Mammary epithelial cell (primary cell): ENCODE measurements at regions of chr1 and their contacts with region 1.

Region 1: DNA sequence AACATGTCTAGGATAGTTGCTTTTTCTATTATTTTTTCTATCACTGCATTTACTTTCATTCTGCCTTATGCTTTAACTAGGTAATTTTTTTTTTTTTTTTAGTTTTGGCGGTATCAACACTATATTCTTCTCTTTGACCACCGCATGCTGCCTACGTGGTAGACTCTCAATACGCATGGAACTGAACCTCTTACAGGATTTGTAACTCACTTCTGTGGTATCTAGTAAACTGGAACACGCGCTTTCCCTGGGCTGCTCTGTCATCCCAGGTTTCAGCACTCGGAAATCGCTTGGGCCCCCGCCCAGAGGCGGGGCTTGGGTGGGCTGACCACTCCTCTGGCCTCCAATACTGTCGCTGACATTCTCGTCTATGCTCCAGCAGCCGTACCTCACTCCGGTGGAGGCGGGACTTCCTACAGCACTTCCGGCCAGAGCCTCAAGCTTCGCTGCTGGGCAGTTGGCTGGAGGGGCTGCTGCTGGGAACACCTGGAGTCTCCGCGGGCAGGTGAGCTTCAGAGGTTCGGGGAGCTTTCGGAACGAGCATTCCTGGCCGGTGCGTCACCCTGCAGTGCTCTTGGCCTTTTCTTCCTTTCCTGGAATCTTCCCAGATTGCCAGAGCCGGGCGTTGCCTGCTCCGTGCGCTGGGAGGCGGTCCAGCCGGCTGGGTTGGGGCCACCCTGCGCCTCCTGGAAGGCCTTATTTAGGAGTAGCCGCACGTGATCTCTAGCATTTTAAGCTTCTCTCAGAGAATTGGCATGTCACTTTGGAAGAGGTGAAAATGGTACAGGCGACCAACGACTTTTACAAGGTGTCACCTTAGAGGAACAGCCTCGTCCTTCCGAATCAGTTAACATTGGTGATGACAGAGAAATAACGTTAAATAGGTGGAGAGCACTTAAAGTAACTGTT is at the start of gene TBCE:
- DNase-seq: peak; percentile 100
- H3K4me3 ChIP-seq: peak within 1 kb of the TSS; percentile 53 to 68 (median 63)
- H3K27ac ChIP-seq: peak within 1 kb of the TSS; percentile 94
- H3K4me1 ChIP-seq: peaks cover 15% of the 10 kb centered on the region
- H3K27me3 ChIP-seq: no peaks in the 10 kb centered on the region
- CTCF ChIP-seq: peak in 1 of 2 donors; percentile 44
- total RNA-seq, gene TBCE: 15.8 to 19.4 TPM

Region 2: GRCh38 chr1:235253219-235253962 is 113.9 kb before region 1 on chr1:
- CTCF ChIA-PET with region 1: no interaction called
- dilution Hi-C with region 1: no loop called
- in situ Hi-C with region 1: no loop called
- intact Hi-C with region 1: loop called (anchors 2 kb)
- DNase-seq: peak; percentile 63
- H3K4me3 ChIP-seq: no peak overlapping the region
- H3K27ac ChIP-seq: no peak overlapping the region
- H3K4me1 ChIP-seq: no peaks in the 10 kb centered on the region
- H3K27me3 ChIP-seq: no peaks in the 10 kb centered on the region
- CTCF ChIP-seq: peak; percentile 73 to 93

Region 3: DNA sequence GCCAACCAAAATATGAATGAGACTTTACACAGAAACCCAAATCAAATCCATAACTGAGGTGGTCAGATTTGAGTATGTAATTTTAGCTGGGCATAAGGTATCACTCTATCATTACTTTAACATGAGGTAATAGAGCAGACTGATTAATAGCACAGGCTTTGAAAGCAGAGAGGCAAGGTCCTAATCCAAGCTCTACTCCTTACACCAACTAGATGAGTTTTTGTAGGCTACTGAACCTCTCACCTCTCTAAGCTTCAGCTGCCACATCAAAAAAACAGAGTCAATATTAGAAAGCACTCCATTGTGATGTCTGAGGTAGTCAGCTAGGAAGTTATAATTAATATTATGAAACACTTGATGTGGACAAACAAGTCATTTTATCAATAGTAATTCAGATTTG is 102.9 kb before region 1 on chr1:
- CTCF ChIA-PET with region 1: no interaction called
- dilution Hi-C with region 1: loop called (anchors 5 kb)
- in situ Hi-C with region 1: no loop called
- intact Hi-C with region 1: no loop called
- DNase-seq: no peak
- H3K4me3 ChIP-seq: no peak overlapping the region
- H3K27ac ChIP-seq: no peak overlapping the region
- H3K4me1 ChIP-seq: no peaks in the 10 kb centered on the region
- H3K27me3 ChIP-seq: no peaks in the 10 kb centered on the region
- CTCF ChIP-seq: no peak

Region 4: GRCh38 chr1:235397733-235398132 is 30.5 kb after region 1 on chr1:
- CTCF ChIA-PET with region 1: interaction called, 10 read pairs
- dilution Hi-C with region 1: no loop called
- in situ Hi-C with region 1: no loop called
- intact Hi-C with region 1: no loop called
- DNase-seq: peak; percentile 97
- H3K4me3 ChIP-seq: no peak overlapping the region
- H3K27ac ChIP-seq: peak overlapping the region; percentile 81
- H3K4me1 ChIP-seq: peaks cover 16% of the 10 kb centered on the region
- H3K27me3 ChIP-seq: no peaks in the 10 kb centered on the region
- CTCF ChIP-seq: no peak

Region 5: DNA sequence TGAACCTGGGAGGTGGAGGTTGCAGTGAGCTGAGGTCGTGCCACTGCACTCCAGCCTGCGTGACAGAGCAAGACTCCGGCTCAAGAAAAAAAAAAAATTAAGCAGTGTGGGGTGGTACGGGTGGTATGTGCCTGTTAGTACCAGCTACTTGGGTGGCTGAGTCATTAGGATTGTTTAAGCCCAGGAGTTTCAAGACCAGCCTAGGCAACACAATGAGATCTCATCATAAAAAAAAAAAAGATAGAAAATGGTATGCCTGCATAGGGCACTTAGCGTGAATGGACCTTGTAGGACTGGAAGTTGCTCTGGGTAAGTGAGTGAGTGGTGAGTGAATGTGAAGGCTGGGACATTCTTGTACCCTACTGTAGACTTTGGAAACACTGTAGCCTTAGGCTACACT is 36.9 kb after region 1 on chr1:
- CTCF ChIA-PET with region 1: no interaction called
- dilution Hi-C with region 1: no loop called
- in situ Hi-C with region 1: no loop called
- intact Hi-C with region 1: loop called (anchors 1 kb)
- DNase-seq: peak; percentile 95
- H3K4me3 ChIP-seq: no peak overlapping the region
- H3K27ac ChIP-seq: peak overlapping the region; percentile 53
- H3K4me1 ChIP-seq: peaks cover 5% of the 10 kb centered on the region
- H3K27me3 ChIP-seq: no peaks in the 10 kb centered on the region
- CTCF ChIP-seq: no peak